IMR-90 (cell line): ENCODE measurements at regions of chr10 and their contacts with region 1.

Region 1: GRCh38 chr10:101214446-101215396 is 14.5 kb downstream of the LBX1 start:
- DNase-seq: peak; percentile 32
- ATAC-seq: peak; percentile 61
- H3K4me3 ChIP-seq: no peak overlapping the region
- H3K27ac ChIP-seq: no peak overlapping the region
- H3K4me1 ChIP-seq: no peaks in the 10 kb centered on the region
- H3K27me3 ChIP-seq: peaks cover 71% of the 10 kb centered on the region
- CTCF ChIP-seq: peak; percentile 82
- POLR2A ChIP-seq: no peak
- RAD21 ChIP-seq: peak; percentile 78

Region 2: GRCh38 chr10:101161494-101162299 is 53.0 kb before region 1 on chr10:
- CTCF ChIA-PET with region 1: no interaction called
- POLR2A ChIA-PET with region 1: no interaction called
- dilution Hi-C with region 1: no loop called
- in situ Hi-C with region 1: no loop called
- intact Hi-C with region 1: loop called (anchors 5 kb)
- DNase-seq: peak; percentile 65
- ATAC-seq: peak; percentile 97
- H3K4me3 ChIP-seq: peak overlapping the region; percentile 28
- H3K27ac ChIP-seq: no peak overlapping the region
- H3K4me1 ChIP-seq: no peaks in the 10 kb centered on the region
- H3K27me3 ChIP-seq: peaks cover 40% of the 10 kb centered on the region
- CTCF ChIP-seq: peak; percentile 94
- POLR2A ChIP-seq: no peak
- RAD21 ChIP-seq: peak; percentile 82

Region 3: GRCh38 chr10:101291331-101292193 is 76.8 kb after region 1 on chr10:
- CTCF ChIA-PET with region 1: interaction called, 5 read pairs
- POLR2A ChIA-PET with region 1: no interaction called
- dilution Hi-C with region 1: no loop called
- in situ Hi-C with region 1: loop called (anchors 5 kb)
- intact Hi-C with region 1: loop called (anchors 2 kb)
- DNase-seq: peak; percentile 23
- ATAC-seq: peak; percentile 81
- H3K4me3 ChIP-seq: peak overlapping the region; percentile 36; the same call in 1 of the 2 replicates
- H3K27ac ChIP-seq: no peak overlapping the region
- H3K4me1 ChIP-seq: no peaks in the 10 kb centered on the region
- H3K27me3 ChIP-seq: peaks cover 82% of the 10 kb centered on the region
- CTCF ChIP-seq: peak; percentile 58
- POLR2A ChIP-seq: no peak
- RAD21 ChIP-seq: peak; percentile 51

Region 4: DNA sequence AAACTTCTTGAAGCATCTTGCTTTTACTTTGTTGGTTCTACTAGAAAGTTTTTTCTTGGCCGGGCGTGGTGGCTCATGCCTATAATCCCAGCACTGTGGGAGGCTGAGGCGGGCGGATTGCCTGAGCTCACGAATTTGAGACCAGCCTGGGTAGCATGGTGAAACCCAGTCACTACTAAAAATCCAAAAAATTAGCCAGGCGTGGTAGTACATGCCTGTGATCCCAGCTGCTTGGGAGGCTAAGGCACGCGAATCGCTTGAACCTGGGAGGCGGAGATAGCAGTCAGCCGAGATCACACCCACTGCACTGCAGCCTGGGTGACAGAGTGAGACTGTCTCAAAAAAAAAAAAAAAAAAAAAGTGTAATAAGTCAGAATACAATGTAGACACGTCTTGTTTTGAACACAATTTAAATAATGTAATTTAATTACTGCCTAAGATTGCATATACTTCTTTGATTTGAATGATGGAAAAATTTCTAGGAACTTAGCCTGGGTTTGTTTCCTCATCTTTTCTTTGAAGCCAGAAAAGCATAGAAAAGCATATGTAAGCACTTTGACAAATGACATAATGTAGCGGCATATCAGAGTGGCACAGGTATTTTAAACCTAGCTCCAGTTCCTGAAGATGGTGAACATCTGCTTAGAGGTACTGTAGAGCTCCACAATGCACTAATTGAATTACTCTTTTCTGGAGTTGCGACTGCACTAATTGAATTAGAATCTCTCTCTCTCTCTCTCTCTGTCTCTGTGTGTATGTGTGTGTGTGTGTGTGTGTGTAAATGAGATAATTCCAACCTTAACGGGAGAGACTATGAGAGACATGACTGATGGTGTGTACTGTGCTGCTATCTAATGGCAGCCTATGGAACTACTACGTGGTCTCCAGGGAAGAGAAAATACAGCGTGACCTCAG is 227.1 kb after region 1 on chr10:
- CTCF ChIA-PET with region 1: no interaction called
- POLR2A ChIA-PET with region 1: no interaction called
- dilution Hi-C with region 1: no loop called
- in situ Hi-C with region 1: loop called (anchors 10 kb)
- intact Hi-C with region 1: loop called (anchors 1 kb)
- DNase-seq: peak; percentile 78
- ATAC-seq: peak; percentile 97
- H3K4me3 ChIP-seq: no peak overlapping the region
- H3K27ac ChIP-seq: no peak overlapping the region
- H3K4me1 ChIP-seq: no peaks in the 10 kb centered on the region
- H3K27me3 ChIP-seq: no peaks in the 10 kb centered on the region
- CTCF ChIP-seq: peak; percentile 69
- POLR2A ChIP-seq: no peak
- RAD21 ChIP-seq: peak; percentile 83

Region 5: DNA sequence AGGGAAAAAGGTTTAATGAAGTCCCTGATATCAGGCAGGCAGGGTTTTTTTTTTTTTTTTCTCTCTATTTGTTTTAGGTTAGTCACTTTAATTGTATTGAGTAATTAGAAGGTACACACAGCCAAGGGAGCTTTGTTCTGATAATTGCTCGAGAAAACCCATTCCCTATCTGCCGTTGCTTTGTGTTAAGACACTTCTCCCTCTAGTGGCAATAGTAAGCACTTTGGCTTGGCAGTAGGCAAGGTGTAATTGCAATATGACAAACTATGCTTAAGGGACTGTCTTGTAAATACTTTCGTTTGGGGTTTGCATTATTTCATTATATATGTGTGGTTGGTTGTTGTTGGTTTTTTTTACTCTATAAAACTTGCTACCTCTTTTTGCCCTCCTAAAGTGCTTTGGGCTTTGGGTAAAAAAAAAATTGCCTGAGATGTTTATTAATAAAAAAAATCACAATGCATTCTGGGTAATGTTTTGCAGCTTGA is 252.6 kb after region 1 on chr10:
- CTCF ChIA-PET with region 1: interaction called, 5 read pairs
- POLR2A ChIA-PET with region 1: no interaction called
- dilution Hi-C with region 1: no loop called
- in situ Hi-C with region 1: no loop called
- intact Hi-C with region 1: loop called (anchors 1 kb)
- DNase-seq: peak; percentile 78
- ATAC-seq: peak; percentile 93
- H3K4me3 ChIP-seq: no peak overlapping the region
- H3K27ac ChIP-seq: no peak overlapping the region
- H3K4me1 ChIP-seq: peaks cover 2% of the 10 kb centered on the region; the same call in 1 of the 2 replicates
- H3K27me3 ChIP-seq: no peaks in the 10 kb centered on the region
- CTCF ChIP-seq: peak; percentile 79
- POLR2A ChIP-seq: no peak
- RAD21 ChIP-seq: peak; percentile 60

Region 6: DNA sequence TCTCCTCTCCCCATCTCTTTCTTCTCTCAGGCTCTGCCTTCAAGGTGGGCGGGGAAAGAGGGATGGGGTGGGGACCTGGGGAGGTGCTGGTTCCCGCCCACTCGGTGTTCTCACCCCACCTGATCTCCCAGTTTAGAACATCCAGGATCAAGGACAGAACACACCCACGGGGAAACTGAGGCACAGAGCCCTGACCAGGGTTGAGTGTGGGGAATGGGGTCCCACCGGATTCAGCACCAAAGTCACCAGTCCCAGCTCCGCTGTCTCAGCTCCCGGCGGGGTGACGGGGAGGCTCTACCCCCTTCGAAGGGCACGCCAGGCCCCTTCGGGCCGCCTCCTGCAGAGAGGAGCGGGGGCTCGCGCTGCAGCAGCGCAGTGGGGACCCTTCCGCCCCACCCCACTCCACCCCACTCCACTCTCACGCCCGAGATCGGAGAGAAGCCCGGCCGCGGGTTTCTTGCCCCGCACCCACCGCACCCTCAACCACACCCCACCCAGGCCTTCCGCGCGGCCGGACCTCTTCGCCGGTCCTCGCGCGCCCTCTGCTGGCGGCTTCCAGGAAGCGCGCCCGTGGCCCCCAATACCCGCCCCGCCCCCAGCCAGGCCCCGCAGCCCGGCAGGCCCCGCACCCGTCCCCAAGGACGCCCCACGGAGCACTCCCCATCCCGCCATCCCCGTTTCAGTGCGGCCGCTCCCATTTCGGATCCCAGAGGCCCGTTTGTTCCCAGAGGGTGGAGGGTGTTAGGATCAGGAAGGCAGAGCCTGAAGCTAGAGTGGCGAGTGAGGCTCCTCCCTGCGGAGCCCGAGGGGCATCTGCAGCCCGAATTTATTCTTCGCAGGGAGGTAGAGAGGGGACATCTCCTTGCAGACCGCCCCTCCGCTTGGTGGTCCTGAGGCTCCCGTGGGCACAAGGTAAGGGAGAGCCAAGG is 355.4 kb after region 1 on chr10:
- CTCF ChIA-PET with region 1: interaction called, 16 read pairs
- POLR2A ChIA-PET with region 1: no interaction called
- dilution Hi-C with region 1: no loop called
- in situ Hi-C with region 1: loop called (anchors 5 kb)
- intact Hi-C with region 1: loop called (anchors 1 kb)
- DNase-seq: peak; percentile 35
- ATAC-seq: peak; percentile 91
- H3K4me3 ChIP-seq: peak overlapping the region; percentile 49
- H3K27ac ChIP-seq: no peak overlapping the region
- H3K4me1 ChIP-seq: peaks cover 6% of the 10 kb centered on the region
- H3K27me3 ChIP-seq: peaks cover 43% of the 10 kb centered on the region
- CTCF ChIP-seq: peak; percentile 64
- POLR2A ChIP-seq: 0 out of 2 replicates have a peak, but pooled peaks have one; percentile 12
- RAD21 ChIP-seq: peak; percentile 70

Region 7: GRCh38 chr10:101782811-101783735 is 568.4 kb after region 1 on chr10 and contains the start of gene NPM3:
- CTCF ChIA-PET with region 1: no interaction called
- POLR2A ChIA-PET with region 1: no interaction called
- dilution Hi-C with region 1: no loop called
- in situ Hi-C with region 1: loop called (anchors 5 kb)
- intact Hi-C with region 1: loop called (anchors 1 kb)
- DNase-seq: peak; percentile 70
- ATAC-seq: peak; percentile 84
- H3K4me3 ChIP-seq: peak within 1 kb of the TSS; percentile 63
- H3K27ac ChIP-seq: peak within 1 kb of the TSS; percentile 51
- H3K4me1 ChIP-seq: peaks cover 11% of the 10 kb centered on the region
- H3K27me3 ChIP-seq: peaks cover 3% of the 10 kb centered on the region; the same call in 1 of the 2 replicates
- CTCF ChIP-seq: no peak
- POLR2A ChIP-seq: peak; percentile 59; the same call in 1 of the 2 replicates
- RAD21 ChIP-seq: no peak
- total RNA-seq, gene NPM3: 112 and 122 TPM in 2 replicates

Region 8: DNA sequence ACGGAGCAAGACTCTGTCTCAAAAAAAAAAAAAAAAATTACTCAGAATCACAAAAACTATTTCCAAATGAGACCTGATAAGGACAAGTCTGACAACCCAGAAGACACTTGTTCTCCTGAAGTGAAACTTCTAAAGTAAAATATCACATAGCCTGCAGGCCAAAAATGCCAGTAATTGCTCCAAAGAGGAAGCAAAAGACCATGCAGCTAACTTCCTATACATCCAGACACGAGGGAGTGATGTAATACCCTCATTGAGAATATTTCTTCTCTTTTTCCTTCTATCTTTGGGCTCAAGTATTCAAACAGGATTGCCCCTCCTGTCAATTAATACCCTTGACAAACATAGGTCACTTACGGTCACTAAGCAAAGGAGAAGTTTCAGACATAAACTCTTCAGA is 810.1 kb after region 1 on chr10:
- CTCF ChIA-PET with region 1: no interaction called
- POLR2A ChIA-PET with region 1: no interaction called
- dilution Hi-C with region 1: no loop called
- in situ Hi-C with region 1: no loop called
- intact Hi-C with region 1: no loop called
- DNase-seq: no peak
- ATAC-seq: no peak
- H3K4me3 ChIP-seq: no peak overlapping the region
- H3K27ac ChIP-seq: no peak overlapping the region
- H3K4me1 ChIP-seq: no peaks in the 10 kb centered on the region
- H3K27me3 ChIP-seq: no peaks in the 10 kb centered on the region
- CTCF ChIP-seq: no peak
- POLR2A ChIP-seq: no peak
- RAD21 ChIP-seq: no peak